K562 (cell line): ENCODE measurements at regions of chr1 and their contacts with region 1.

Region 1: DNA sequence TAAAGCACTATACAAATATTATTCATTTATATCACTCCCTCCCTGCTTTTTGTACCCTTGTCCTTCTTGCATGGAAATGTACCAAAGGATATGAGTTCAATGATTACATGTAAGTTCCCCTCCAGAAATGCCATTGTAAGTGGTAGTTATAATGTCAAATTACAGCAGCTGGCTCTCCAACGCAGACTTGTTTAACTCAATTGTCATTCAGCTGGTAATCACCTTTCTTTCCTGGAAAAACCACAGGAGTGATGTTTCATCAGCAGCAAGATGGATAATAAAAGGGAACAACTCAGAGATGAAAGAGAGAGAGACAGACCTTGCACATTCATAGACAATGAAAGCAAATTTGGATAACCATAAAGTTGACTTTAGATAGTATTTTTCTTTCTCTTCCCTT is 578.6 kb upstream of the PBX1 start:
- DNase-seq: no peak
- ATAC-seq: no peak
- H3K4me3 ChIP-seq: no peak overlapping the region
- H3K27ac ChIP-seq: no peak overlapping the region
- H3K4me1 ChIP-seq: no peaks in the 10 kb centered on the region
- H3K27me3 ChIP-seq: no peaks in the 10 kb centered on the region
- CTCF ChIP-seq: no peak
- EP300 ChIP-seq: no peak
- POLR2A ChIP-seq: no peak
- RAD21 ChIP-seq: no peak

Region 2: GRCh38 chr1:163863731-163864130 is 116.7 kb before region 1 on chr1:
- CTCF ChIA-PET with region 1: no interaction called
- POLR2A ChIA-PET with region 1: no interaction called
- in situ Hi-C with region 1: no loop called
- intact Hi-C with region 1: no loop called
- DNase-seq: no peak
- ATAC-seq: no peak
- H3K4me3 ChIP-seq: no peak overlapping the region
- H3K27ac ChIP-seq: no peak overlapping the region
- H3K4me1 ChIP-seq: no peaks in the 10 kb centered on the region
- H3K27me3 ChIP-seq: no peaks in the 10 kb centered on the region
- CTCF ChIP-seq: no peak
- EP300 ChIP-seq: no peak
- POLR2A ChIP-seq: no peak
- RAD21 ChIP-seq: no peak

Region 3: DNA sequence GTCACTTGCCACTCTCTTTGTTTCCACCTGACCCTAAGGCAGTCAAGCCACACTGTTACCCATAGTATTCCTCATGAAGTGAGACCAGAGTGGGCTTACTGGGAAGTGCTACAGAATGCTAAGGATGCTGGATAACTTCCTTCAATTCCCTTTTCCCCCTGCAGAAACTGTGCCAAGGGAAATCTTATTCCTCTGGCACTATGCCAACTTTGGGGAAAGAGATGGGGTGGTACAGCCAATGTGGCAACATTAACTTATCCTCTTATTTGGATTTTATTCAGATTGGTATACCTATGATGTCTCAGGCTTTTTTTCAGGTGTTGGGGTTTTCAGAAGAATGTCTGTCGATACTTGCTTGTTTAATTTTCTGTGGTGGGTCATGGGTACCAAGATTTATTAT is 20.8 kb before region 1 on chr1:
- CTCF ChIA-PET with region 1: no interaction called
- POLR2A ChIA-PET with region 1: no interaction called
- in situ Hi-C with region 1: no loop called
- intact Hi-C with region 1: loop called (anchors 1 kb)
- DNase-seq: peak in 1 of 4 experiments; percentile 2
- ATAC-seq: no peak
- H3K4me3 ChIP-seq: no peak overlapping the region
- H3K27ac ChIP-seq: no peak overlapping the region
- H3K4me1 ChIP-seq: no peaks in the 10 kb centered on the region
- H3K27me3 ChIP-seq: no peaks in the 10 kb centered on the region
- CTCF ChIP-seq: no peak
- EP300 ChIP-seq: no peak
- POLR2A ChIP-seq: no peak
- RAD21 ChIP-seq: no peak